Heart left ventricle (tissue), 16 donors: ENCODE measurements at regions of chr6 and their contacts with region 1.

Region 1: GRCh38 chr6:137707590-137708360 is 159.3 kb upstream of the TNFAIP3 start:
- DNase-seq: peak; percentile 61 to 72 (median 64)
- ATAC-seq: peak in 3 of 4 donors; percentile 60 to 68 (median 63)
- H3K4me3 ChIP-seq: peak overlapping the region in 6 of 12 donors; percentile 11 to 35 (median 24)
- H3K27ac ChIP-seq: peak overlapping the region in 2 of 12 donors; percentile 7 to 53
- H3K4me1 ChIP-seq: peaks cover 0 to 36% (median 15%) of the 10 kb centered on the region in 12 donors
- H3K27me3 ChIP-seq: no peaks in the 10 kb centered on the region
- CTCF ChIP-seq: peak; percentile 59 to 88 (median 82)
- POLR2A ChIP-seq: no peak

Region 2: GRCh38 chr6:136859430-136859829 is 848.3 kb before region 1 on chr6:
- intact Hi-C with region 1: no loop called
- DNase-seq: no peak
- ATAC-seq: peak in 1 of 4 donors; percentile 42
- H3K4me3 ChIP-seq: no peak overlapping the region
- H3K27ac ChIP-seq: no peak overlapping the region
- H3K4me1 ChIP-seq: no peaks in the 10 kb centered on the region
- H3K27me3 ChIP-seq: no peaks in the 10 kb centered on the region
- CTCF ChIP-seq: no peak
- POLR2A ChIP-seq: no peak

Region 3: GRCh38 chr6:137799950-137800568 is 92.3 kb after region 1 on chr6:
- intact Hi-C with region 1: loop called in 4 of 10 experiments (anchors 5 to 10 kb)
- DNase-seq: peak in 3 of 5 donors; percentile 29 to 48 (median 48)
- ATAC-seq: peak in 3 of 4 donors; percentile 42 to 54 (median 46)
- H3K4me3 ChIP-seq: no peak overlapping the region
- H3K27ac ChIP-seq: no peak overlapping the region
- H3K4me1 ChIP-seq: peaks cover 0 to 24% (median under 1%) of the 10 kb centered on the region in 12 donors
- H3K27me3 ChIP-seq: no peaks in the 10 kb centered on the region
- CTCF ChIP-seq: peak; percentile 19 to 66 (median 54)
- POLR2A ChIP-seq: no peak

Region 4: DNA sequence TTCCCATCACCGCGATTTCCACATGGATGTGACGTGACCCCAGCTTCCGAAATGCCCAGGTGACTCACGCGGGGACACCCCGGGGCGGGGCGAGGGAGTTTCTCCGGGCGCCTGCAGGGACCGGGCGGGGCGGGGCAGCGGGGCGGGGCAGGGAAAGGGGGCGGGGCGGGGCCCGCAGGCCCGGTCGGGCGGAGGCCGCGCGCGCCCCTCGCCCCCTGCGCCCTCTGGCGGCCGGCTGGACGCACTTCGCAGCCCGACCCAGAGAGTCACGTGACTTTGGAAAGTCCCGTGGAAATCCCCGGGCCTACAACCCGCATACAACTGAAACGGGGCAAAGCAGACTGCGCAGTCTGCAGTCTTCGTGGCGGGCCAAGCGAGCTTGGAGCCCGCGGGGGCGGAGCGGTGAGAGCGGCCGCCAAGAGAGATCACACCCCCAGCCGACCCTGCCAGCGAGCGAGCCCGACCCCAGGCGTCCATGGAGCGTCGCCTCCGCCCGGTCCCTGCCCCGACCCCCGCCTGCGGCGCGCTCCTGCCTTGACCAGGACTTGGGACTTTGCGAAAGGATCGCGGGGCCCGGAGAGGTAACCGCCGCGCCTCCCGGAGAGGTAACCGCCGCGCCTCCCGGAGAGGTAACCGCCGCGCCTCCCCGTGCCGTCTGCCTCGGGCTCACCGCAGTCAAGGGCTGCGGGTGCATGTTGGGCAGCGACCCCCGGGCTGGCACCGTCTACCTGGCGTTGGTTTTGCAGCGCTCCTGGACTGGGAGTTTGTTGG is 159.3 kb after region 1 on chr6 and contains the start of gene TNFAIP3:
- intact Hi-C with region 1: loop called (anchors 1 to 2 kb)
- DNase-seq: peak; percentile 91 to 96 (median 94)
- ATAC-seq: peak; percentile 88 to 96 (median 93)
- H3K4me3 ChIP-seq: peak within 1 kb of the TSS; percentile 64 to 98 (median 92)
- H3K27ac ChIP-seq: peak within 1 kb of the TSS; percentile 72 to 97 (median 86)
- H3K4me1 ChIP-seq: peaks cover 0 to 64% (median 19%) of the 10 kb centered on the region in 12 donors
- H3K27me3 ChIP-seq: no peaks in the 10 kb centered on the region
- CTCF ChIP-seq: peak; percentile 56 to 98 (median 87)
- POLR2A ChIP-seq: peak in 1 of 2 donors; percentile 68
- total RNA-seq, gene TNFAIP3: 3.2 to 33.7 (median 6.0) TPM

Region 5: DNA sequence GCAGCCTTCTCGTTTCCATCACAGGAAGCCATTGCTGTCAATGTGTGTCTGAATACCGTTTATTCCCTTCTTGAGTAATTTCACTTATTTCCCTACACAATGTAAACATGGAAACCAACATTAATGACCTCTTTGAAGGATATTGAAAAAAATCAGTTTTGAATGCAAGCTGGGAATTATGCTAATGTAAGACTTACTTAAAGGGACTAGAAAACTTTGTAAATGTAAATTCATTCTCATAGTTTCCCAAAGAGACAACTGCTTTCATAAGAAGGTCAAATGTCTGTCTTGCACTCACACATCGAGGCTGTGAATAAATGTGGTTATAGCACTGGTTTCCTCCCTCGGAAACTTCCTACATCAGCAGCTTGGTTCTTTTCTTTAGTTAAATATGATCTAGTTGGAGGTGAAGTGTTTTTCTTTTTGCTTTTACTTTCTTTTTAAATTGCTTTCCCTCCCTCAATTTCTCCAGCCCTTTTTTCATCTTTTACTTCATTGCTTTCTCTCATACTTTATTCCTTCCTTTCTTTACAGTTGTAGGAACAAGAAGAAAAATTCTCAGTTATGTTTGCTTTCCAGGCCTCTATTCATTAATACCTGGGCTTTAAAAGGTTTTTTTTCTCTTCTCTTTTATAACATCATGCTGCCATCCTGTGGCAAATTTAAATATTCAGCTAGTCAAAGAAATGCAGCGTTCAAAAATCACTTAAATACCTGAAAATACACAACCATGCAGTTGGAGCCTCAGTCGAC is 267.6 kb after region 1 on chr6:
- intact Hi-C with region 1: loop called in 1 of 10 experiments (anchors 10 kb)
- DNase-seq: no peak
- ATAC-seq: no peak
- H3K4me3 ChIP-seq: no peak overlapping the region
- H3K27ac ChIP-seq: peak overlapping the region in 1 of 12 donors; percentile 66
- H3K4me1 ChIP-seq: peaks cover 0 to 20% (median 0%) of the 10 kb centered on the region in 12 donors
- H3K27me3 ChIP-seq: no peaks in the 10 kb centered on the region
- CTCF ChIP-seq: peak in 6 of 12 donors; percentile 9 to 32 (median 28)
- POLR2A ChIP-seq: no peak

Region 6: GRCh38 chr6:138007014-138007472 is 299.3 kb after region 1 on chr6:
- intact Hi-C with region 1: loop called in 5 of 10 experiments (anchors 2 to 5 kb)
- DNase-seq: no peak
- ATAC-seq: peak in 1 of 4 donors; percentile 39
- H3K4me3 ChIP-seq: no peak overlapping the region
- H3K27ac ChIP-seq: no peak overlapping the region
- H3K4me1 ChIP-seq: no peaks in the 10 kb centered on the region
- H3K27me3 ChIP-seq: no peaks in the 10 kb centered on the region
- CTCF ChIP-seq: peak in 11 of 12 donors; percentile 23 to 56 (median 45)
- POLR2A ChIP-seq: no peak

Region 7: GRCh38 chr6:138115877-138116660 is 408.3 kb after region 1 on chr6:
- intact Hi-C with region 1: loop called in 1 of 10 experiments (anchors 5 kb)
- DNase-seq: peak; percentile 24 to 63 (median 50)
- ATAC-seq: peak; percentile 63 to 88 (median 85)
- H3K4me3 ChIP-seq: no peak overlapping the region
- H3K27ac ChIP-seq: no peak overlapping the region
- H3K4me1 ChIP-seq: peaks cover 0 to 6% (median 0%) of the 10 kb centered on the region in 12 donors
- H3K27me3 ChIP-seq: peaks cover 0 to 10% (median 0%) of the 10 kb centered on the region in 9 donors
- CTCF ChIP-seq: peak; percentile 66 to 85 (median 74)
- POLR2A ChIP-seq: no peak